Heart left ventricle (tissue), 16 donors: ENCODE measurements at regions of chr7 and their contacts with region 1.

Region 1: GRCh38 chr7:111486472-111487142 is 75.7 kb downstream of the IMMP2L start:
- DNase-seq: no peak
- ATAC-seq: peak in 3 of 4 donors; percentile 55 to 63 (median 55)
- H3K4me3 ChIP-seq: no peak overlapping the region
- H3K27ac ChIP-seq: no peak overlapping the region
- H3K4me1 ChIP-seq: peaks cover 0 to 4% (median 0%) of the 10 kb centered on the region in 12 donors
- H3K27me3 ChIP-seq: no peaks in the 10 kb centered on the region
- CTCF ChIP-seq: peak; percentile 54 to 85 (median 72)
- POLR2A ChIP-seq: no peak

Region 2: DNA sequence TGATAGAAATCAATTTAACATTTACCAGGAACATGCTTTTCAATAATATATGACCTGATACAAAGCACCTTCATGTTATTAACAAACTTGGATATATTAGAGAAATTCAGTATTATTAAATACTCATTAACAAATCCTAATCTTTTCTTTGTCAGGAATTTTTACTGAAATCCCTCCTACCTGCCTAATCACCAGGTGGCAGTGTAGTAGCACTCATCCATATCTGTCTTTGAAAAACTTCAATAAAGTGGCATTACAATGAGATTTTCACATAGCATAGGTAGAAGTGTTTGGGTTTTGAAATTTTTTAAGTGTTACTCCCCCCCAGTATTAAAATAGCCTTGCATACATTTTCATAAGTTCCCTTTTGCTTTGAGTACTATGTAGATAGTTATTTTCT is 1642.2 kb before region 1 on chr7:
- intact Hi-C with region 1: loop called in 1 of 10 experiments (anchors 10 kb)
- DNase-seq: no peak
- ATAC-seq: no peak
- H3K4me3 ChIP-seq: no peak overlapping the region
- H3K27ac ChIP-seq: no peak overlapping the region
- H3K4me1 ChIP-seq: no peaks in the 10 kb centered on the region
- H3K27me3 ChIP-seq: no peaks in the 10 kb centered on the region
- CTCF ChIP-seq: peak in 9 of 12 donors; percentile 14 to 45 (median 25)
- POLR2A ChIP-seq: no peak

Region 3: DNA sequence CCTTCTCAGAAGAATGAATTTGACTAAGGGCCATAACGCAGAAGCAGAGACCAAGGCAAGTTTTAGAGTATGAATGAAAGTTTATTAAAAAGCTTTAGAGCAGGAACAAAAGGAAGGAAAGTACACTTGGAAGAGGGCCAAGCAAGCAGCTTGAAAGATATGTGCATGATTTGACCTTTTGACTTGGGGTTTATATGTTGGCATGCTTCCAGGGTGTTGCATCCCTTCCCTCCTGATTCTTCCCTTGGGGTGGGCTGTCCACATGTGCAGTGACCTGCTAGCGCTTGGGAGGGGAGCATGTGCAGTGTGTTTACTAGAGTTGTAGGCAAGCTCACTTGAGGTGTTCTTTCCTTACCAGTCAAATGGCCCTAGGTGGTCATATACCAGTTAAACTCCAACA is 433.6 kb before region 1 on chr7:
- intact Hi-C with region 1: no loop called
- DNase-seq: no peak
- ATAC-seq: no peak
- H3K4me3 ChIP-seq: no peak overlapping the region
- H3K27ac ChIP-seq: no peak overlapping the region
- H3K4me1 ChIP-seq: no peaks in the 10 kb centered on the region
- H3K27me3 ChIP-seq: no peaks in the 10 kb centered on the region
- CTCF ChIP-seq: no peak
- POLR2A ChIP-seq: no peak

Region 4: DNA sequence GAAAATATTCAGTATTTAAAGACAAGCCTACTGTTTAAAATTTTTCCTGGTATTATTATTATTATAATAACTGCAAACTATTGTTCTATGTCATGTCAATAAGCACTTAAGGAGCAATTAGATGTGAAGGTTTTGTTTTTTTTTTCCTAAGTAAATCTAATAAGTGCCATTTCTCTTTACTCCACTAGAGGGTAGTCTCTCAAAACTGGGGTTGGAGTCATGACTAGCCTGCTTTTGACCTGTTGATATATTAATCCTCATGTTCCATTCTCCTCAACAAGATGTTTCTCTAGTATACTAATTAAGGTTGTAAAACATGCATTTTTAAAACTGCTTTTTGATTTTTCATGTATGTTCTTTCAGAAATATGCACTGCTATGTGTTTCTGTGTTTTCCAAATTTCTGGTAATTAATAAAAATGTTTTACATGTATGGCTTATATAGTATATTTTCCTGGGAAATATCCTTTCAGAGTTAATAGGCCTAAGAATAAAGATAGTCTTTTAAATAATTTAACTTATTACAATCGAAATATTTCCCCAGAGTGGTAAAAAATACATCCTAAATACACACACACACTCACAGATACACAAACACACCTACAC is 396.7 kb before region 1 on chr7:
- intact Hi-C with region 1: loop called (anchors 2 to 10 kb)
- DNase-seq: no peak
- ATAC-seq: peak in 3 of 4 donors; percentile 37 to 81 (median 57)
- H3K4me3 ChIP-seq: no peak overlapping the region
- H3K27ac ChIP-seq: no peak overlapping the region
- H3K4me1 ChIP-seq: peaks cover 0 to 27% (median 8%) of the 10 kb centered on the region in 12 donors
- H3K27me3 ChIP-seq: no peaks in the 10 kb centered on the region
- CTCF ChIP-seq: peak; percentile 66 to 86 (median 76)
- POLR2A ChIP-seq: no peak

Region 5: GRCh38 chr7:111098011-111098925 is 388.3 kb before region 1 on chr7:
- intact Hi-C with region 1: loop called in 6 of 10 experiments (anchors 5 to 10 kb)
- DNase-seq: peak in 4 of 5 donors; percentile 11 to 31 (median 23)
- ATAC-seq: peak in 2 of 4 donors; percentile 61 to 73
- H3K4me3 ChIP-seq: no peak overlapping the region
- H3K27ac ChIP-seq: no peak overlapping the region
- H3K4me1 ChIP-seq: peaks cover 0 to 8% (median 0%) of the 10 kb centered on the region in 12 donors
- H3K27me3 ChIP-seq: no peaks in the 10 kb centered on the region
- CTCF ChIP-seq: peak; percentile 42 to 79 (median 64)
- POLR2A ChIP-seq: no peak

Region 6: DNA sequence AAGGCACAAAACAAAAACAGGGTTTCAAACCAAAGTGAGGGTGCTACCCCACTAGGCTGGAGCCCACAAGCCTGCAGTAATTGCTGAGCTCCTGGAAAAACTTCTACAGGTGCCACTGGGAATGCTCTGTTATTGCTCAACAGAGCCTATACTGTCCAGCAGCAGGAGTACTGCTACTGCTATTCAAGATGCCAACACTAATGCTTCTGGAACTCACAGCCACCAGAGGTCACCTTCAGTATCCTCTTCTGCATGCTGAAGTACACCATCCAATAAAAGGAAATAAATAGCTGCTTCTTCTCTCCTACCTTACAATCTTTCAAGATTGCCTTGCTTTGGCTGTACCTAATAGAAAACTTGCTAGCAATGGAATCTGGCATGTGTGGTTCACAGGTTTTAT is 173.6 kb before region 1 on chr7:
- intact Hi-C with region 1: loop called in 1 of 10 experiments (anchors 10 kb)
- DNase-seq: no peak
- ATAC-seq: no peak
- H3K4me3 ChIP-seq: no peak overlapping the region
- H3K27ac ChIP-seq: no peak overlapping the region
- H3K4me1 ChIP-seq: no peaks in the 10 kb centered on the region
- H3K27me3 ChIP-seq: no peaks in the 10 kb centered on the region
- CTCF ChIP-seq: peak in 4 of 12 donors; percentile 5 to 19 (median 8)
- POLR2A ChIP-seq: no peak

Region 7: GRCh38 chr7:111329367-111330234 is 157.0 kb before region 1 on chr7:
- intact Hi-C with region 1: loop called in 1 of 10 experiments (anchors 10 kb)
- DNase-seq: no peak
- ATAC-seq: no peak
- H3K4me3 ChIP-seq: no peak overlapping the region
- H3K27ac ChIP-seq: no peak overlapping the region
- H3K4me1 ChIP-seq: no peaks in the 10 kb centered on the region
- H3K27me3 ChIP-seq: no peaks in the 10 kb centered on the region
- CTCF ChIP-seq: peak in 1 of 12 donors; percentile 13
- POLR2A ChIP-seq: no peak

Region 8: GRCh38 chr7:111393011-111393754 is 93.4 kb before region 1 on chr7:
- intact Hi-C with region 1: no loop called
- DNase-seq: peak in 2 of 5 donors; percentile 13 to 31
- ATAC-seq: peak in 3 of 4 donors; percentile 32 to 63 (median 60)
- H3K4me3 ChIP-seq: no peak overlapping the region
- H3K27ac ChIP-seq: peak overlapping the region in 11 of 12 donors; percentile 2 to 62 (median 39)
- H3K4me1 ChIP-seq: peaks cover 0 to 26% (median 9%) of the 10 kb centered on the region in 12 donors
- H3K27me3 ChIP-seq: no peaks in the 10 kb centered on the region
- CTCF ChIP-seq: no peak
- POLR2A ChIP-seq: no peak